CD8-positive, alpha-beta T cell (primary cell): ENCODE measurements at regions of chr11 and their contacts with region 1.

Region 1: GRCh38 chr11:122628810-122629555 is 26.5 kb upstream of the UBASH3B start:
- DNase-seq: peak; percentile 46 to 81 (median 71)
- ATAC-seq: peak; percentile 93
- H3K4me3 ChIP-seq: no peak overlapping the region
- H3K4me3 Mint-ChIP-seq: no peak overlapping the region
- H3K27ac ChIP-seq: no peak overlapping the region
- H3K27ac Mint-ChIP-seq: no peak overlapping the region
- H3K4me1 ChIP-seq: no peaks in the 10 kb centered on the region
- H3K4me1 Mint-ChIP-seq: peaks cover 20% of the 10 kb centered on the region
- H3K27me3 ChIP-seq: no peaks in the 10 kb centered on the region
- H3K27me3 Mint-ChIP-seq: no peaks in the 10 kb centered on the region
- CTCF ChIP-seq: peak; percentile 75

Region 2: GRCh38 chr11:122617297-122617696 is 11.7 kb before region 1 on chr11:
- CTCF ChIA-PET with region 1: interaction called, 13 read pairs
- POLR2A ChIA-PET with region 1: no interaction called
- intact Hi-C with region 1: no loop called
- DNase-seq: no peak
- ATAC-seq: no peak
- H3K4me3 ChIP-seq: no peak overlapping the region
- H3K4me3 Mint-ChIP-seq: no peak overlapping the region
- H3K27ac ChIP-seq: no peak overlapping the region
- H3K27ac Mint-ChIP-seq: no peak overlapping the region
- H3K4me1 ChIP-seq: no peaks in the 10 kb centered on the region
- H3K4me1 Mint-ChIP-seq: no peaks in the 10 kb centered on the region
- H3K27me3 ChIP-seq: no peaks in the 10 kb centered on the region
- H3K27me3 Mint-ChIP-seq: no peaks in the 10 kb centered on the region
- CTCF ChIP-seq: no peak

Region 3: GRCh38 chr11:122661182-122661945 is 32.4 kb after region 1 on chr11:
- CTCF ChIA-PET with region 1: interaction called, 13 read pairs
- POLR2A ChIA-PET with region 1: interaction called, 3 read pairs
- intact Hi-C with region 1: no loop called
- DNase-seq: no peak
- ATAC-seq: no peak
- H3K4me3 ChIP-seq: no peak overlapping the region
- H3K4me3 Mint-ChIP-seq: no peak overlapping the region
- H3K27ac ChIP-seq: no peak overlapping the region
- H3K27ac Mint-ChIP-seq: peak overlapping the region; percentile 28
- H3K4me1 ChIP-seq: peaks cover 72% of the 10 kb centered on the region
- H3K4me1 Mint-ChIP-seq: peaks cover 75% of the 10 kb centered on the region
- H3K27me3 ChIP-seq: no peaks in the 10 kb centered on the region
- H3K27me3 Mint-ChIP-seq: no peaks in the 10 kb centered on the region
- CTCF ChIP-seq: no peak

Region 4: GRCh38 chr11:122697636-122698167 is 68.7 kb after region 1 on chr11:
- CTCF ChIA-PET with region 1: interaction called, 17 read pairs
- POLR2A ChIA-PET with region 1: interaction called, 3 read pairs
- intact Hi-C with region 1: no loop called
- DNase-seq: peak in 7 of 9 experiments; percentile 14 to 72 (median 60)
- ATAC-seq: peak; percentile 81
- H3K4me3 ChIP-seq: peak overlapping the region; percentile 4 to 25
- H3K4me3 Mint-ChIP-seq: peak overlapping the region; percentile 66
- H3K27ac ChIP-seq: peak overlapping the region; percentile 57 to 64
- H3K27ac Mint-ChIP-seq: peak overlapping the region; percentile 94
- H3K4me1 ChIP-seq: peaks cover 80% of the 10 kb centered on the region
- H3K4me1 Mint-ChIP-seq: peaks cover 91% of the 10 kb centered on the region
- H3K27me3 ChIP-seq: no peaks in the 10 kb centered on the region
- H3K27me3 Mint-ChIP-seq: no peaks in the 10 kb centered on the region
- CTCF ChIP-seq: no peak

Region 5: DNA sequence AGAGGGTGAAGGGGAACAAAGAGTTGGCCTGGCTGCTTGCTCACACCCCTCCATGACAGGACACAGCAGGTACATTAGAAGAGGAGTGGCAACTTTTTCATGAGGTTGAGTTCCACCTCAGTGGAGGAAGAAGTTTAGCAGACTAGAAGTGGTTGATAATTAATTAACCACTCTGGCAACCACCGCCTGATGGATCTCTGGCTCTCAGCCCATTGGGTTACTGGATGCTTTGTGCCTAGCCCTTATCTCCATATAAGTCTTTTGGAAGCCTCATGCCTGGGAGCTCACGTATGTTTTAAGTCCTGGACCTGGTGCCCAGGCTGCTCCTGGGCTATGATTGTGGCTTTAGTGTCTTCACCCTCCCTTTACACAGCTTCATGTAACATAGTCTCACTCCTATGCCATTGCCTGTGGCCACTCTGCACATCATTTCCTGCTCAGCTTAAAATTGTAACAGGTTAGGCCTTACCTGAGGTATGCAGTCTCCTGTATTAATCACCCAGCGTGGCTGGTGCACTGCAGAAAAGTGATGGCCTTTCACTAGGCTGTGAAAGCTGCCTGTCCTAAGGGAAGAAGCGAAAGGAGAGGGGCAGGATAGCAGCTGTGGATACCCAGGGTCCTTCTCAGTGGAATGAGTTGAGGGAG is 136.6 kb after region 1 on chr11:
- CTCF ChIA-PET with region 1: interaction called, 30 read pairs
- POLR2A ChIA-PET with region 1: interaction called, 4 read pairs
- intact Hi-C with region 1: no loop called
- DNase-seq: no peak
- ATAC-seq: no peak
- H3K4me3 ChIP-seq: no peak overlapping the region
- H3K4me3 Mint-ChIP-seq: no peak overlapping the region
- H3K27ac ChIP-seq: no peak overlapping the region
- H3K27ac Mint-ChIP-seq: no peak overlapping the region
- H3K4me1 ChIP-seq: no peaks in the 10 kb centered on the region
- H3K4me1 Mint-ChIP-seq: peaks cover 26% of the 10 kb centered on the region
- H3K27me3 ChIP-seq: no peaks in the 10 kb centered on the region
- H3K27me3 Mint-ChIP-seq: no peaks in the 10 kb centered on the region
- CTCF ChIP-seq: no peak

Region 6: DNA sequence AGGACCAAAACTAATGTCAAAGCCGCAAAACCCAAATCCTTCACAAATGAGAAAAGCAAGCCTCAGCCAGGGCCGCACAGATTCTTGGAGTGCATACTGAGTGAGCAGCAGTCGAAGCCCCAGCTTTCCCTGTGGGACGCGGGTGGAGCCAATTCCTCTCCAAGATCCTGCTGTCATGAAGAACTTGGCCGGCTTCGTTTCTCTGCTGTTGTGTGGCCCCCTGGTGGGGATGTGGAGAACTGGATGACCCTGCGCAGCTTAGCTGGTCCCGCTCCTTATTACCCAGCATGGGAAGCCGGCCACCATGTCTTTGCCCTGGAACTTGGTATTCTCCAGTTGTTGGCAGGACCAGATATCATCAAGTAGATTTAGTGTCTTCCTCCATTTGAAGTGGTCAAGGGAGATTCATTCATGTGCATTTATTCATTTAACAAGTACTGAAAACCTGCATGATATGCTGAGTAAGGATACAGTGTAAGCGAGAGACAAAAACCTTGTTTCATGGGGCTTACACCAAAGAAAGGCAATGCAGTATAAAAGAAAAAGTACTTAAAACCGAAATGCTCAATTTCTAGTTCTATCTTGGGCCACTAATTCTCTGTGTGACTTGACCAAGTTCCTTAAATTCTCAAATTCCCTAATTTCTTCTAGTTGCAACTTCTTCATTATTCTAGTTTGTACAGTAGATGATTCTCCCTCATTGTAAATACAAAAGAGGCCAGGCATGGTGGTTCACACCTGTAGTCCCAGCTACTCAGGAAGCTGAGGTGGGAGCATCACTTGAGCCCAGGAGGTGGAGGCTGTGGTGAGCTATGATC is 152.6 kb after region 1 on chr11:
- CTCF ChIA-PET with region 1: interaction called, 405 read pairs
- POLR2A ChIA-PET with region 1: interaction called, 4 read pairs
- intact Hi-C with region 1: loop called (anchors 1 kb)
- DNase-seq: peak; percentile 48 to 85 (median 76)
- ATAC-seq: peak; percentile 86
- H3K4me3 ChIP-seq: no peak overlapping the region
- H3K4me3 Mint-ChIP-seq: no peak overlapping the region
- H3K27ac ChIP-seq: no peak overlapping the region
- H3K27ac Mint-ChIP-seq: no peak overlapping the region
- H3K4me1 ChIP-seq: no peaks in the 10 kb centered on the region
- H3K4me1 Mint-ChIP-seq: peaks cover 2% of the 10 kb centered on the region
- H3K27me3 ChIP-seq: no peaks in the 10 kb centered on the region
- H3K27me3 Mint-ChIP-seq: no peaks in the 10 kb centered on the region
- CTCF ChIP-seq: peak; percentile 88